OCI-LY7 (cell line): ENCODE measurements at regions of chr1 and their contacts with region 1.

Region 1: GRCh38 chr1:183023601-183024316 is 539 bp downstream of the LAMC1 start:
- DNase-seq: peak; percentile 87
- H3K4me3 ChIP-seq: peak overlapping the region; percentile 77
- H3K27ac ChIP-seq: peak overlapping the region; percentile 54
- H3K4me1 ChIP-seq: peaks cover 51% of the 10 kb centered on the region
- CTCF ChIP-seq: peak; percentile 71

Region 2: GRCh38 chr1:182927693-182928433 is 95.9 kb before region 1 on chr1:
- CTCF ChIA-PET with region 1: no interaction called
- POLR2A ChIA-PET with region 1: interaction called, 4 read pairs
- intact Hi-C with region 1: loop called (anchors 2 kb)
- DNase-seq: peak; percentile 77
- H3K4me3 ChIP-seq: peak overlapping the region; percentile 59
- H3K27ac ChIP-seq: peak overlapping the region; percentile 84
- H3K4me1 ChIP-seq: peaks cover 32% of the 10 kb centered on the region
- CTCF ChIP-seq: no peak

Region 3: GRCh38 chr1:183048087-183049085 is 24.6 kb after region 1 on chr1:
- CTCF ChIA-PET with region 1: no interaction called
- POLR2A ChIA-PET with region 1: interaction called, 69 read pairs
- intact Hi-C with region 1: loop called (anchors 2 kb)
- DNase-seq: peak; percentile 89
- H3K4me3 ChIP-seq: peak overlapping the region; percentile 55
- H3K27ac ChIP-seq: peak overlapping the region; percentile 93
- H3K4me1 ChIP-seq: peaks cover 79% of the 10 kb centered on the region
- CTCF ChIP-seq: no peak

Region 4: DNA sequence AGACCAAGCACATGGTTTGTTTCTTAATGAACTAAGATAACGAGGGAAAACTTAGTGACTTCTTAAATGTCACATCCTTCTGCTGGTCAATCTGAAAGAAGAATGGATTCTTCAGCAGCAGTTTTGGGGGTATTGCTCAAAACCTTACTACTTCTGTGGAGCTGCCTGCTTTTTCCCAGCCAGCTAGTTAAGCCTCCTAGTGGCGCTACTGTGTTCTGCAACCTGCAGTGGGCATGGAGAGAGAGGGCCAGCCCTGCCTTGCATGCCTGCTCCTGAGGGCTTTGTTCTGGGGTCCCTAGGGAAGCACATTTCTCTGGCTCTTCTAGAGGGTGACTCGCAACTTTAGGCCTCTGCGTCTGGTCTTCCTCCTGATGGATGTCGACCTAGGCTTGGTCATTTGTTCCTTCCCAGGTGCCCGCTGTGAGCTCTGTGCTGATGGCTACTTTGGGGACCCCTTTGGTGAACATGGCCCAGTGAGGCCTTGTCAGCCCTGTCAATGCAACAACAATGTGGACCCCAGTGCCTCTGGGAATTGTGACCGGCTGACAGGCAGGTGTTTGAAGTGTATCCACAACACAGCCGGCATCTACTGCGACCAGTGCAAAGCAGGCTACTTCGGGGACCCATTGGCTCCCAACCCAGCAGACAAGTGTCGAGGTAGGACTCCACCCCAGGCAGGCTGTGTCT is 204.3 kb after region 1 on chr1:
- CTCF ChIA-PET with region 1: no interaction called
- POLR2A ChIA-PET with region 1: no interaction called
- intact Hi-C with region 1: loop called (anchors 2 kb)
- DNase-seq: peak; percentile 52
- H3K4me3 ChIP-seq: no peak overlapping the region
- H3K27ac ChIP-seq: no peak overlapping the region
- H3K4me1 ChIP-seq: no peaks in the 10 kb centered on the region
- CTCF ChIP-seq: peak; percentile 81